ENCODE measurements at regions of chr16 and their contacts with region 1.

Region 1: DNA sequence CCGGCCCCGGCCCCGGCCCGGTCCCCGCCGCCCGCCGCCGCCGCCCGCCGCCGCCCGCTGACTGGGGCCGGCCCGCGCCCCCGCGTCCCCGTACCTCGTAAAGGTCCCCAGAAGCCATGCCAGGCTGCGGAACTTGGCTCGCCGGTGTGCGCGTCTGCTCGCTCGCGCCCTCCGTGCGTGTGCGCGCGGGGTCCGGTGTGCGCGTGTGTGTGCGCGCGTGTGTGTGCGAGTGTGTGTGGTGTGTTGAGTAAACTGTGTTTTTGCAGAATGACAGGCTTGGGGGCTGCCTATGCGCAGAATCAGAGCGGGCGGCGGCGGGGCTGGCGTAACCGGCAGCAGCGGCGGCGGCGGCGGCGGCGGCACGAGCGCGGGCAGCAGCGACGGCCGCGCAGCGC is 345 bp downstream of the CDYL2 start:
- DNase-seq: peak; percentile 57 to 70 (median 65)
- H3K4me3 ChIP-seq: peak overlapping the region in 1 of 2 donors; percentile 51
- H3K4me3 Mint-ChIP-seq: peak overlapping the region; percentile 80 to 98 (median 96)
- H3K27ac ChIP-seq: no peak overlapping the region
- H3K27ac Mint-ChIP-seq: peak overlapping the region; percentile 74 to 96 (median 86)
- H3K4me1 ChIP-seq: peaks cover 31% of the 10 kb centered on the region
- H3K4me1 Mint-ChIP-seq: peaks cover 12 to 38% (median 27%) of the 10 kb centered on the region in 4 donors
- H3K27me3 ChIP-seq: no peaks in the 10 kb centered on the region
- H3K27me3 Mint-ChIP-seq: no peaks in the 10 kb centered on the region

Region 2: DNA sequence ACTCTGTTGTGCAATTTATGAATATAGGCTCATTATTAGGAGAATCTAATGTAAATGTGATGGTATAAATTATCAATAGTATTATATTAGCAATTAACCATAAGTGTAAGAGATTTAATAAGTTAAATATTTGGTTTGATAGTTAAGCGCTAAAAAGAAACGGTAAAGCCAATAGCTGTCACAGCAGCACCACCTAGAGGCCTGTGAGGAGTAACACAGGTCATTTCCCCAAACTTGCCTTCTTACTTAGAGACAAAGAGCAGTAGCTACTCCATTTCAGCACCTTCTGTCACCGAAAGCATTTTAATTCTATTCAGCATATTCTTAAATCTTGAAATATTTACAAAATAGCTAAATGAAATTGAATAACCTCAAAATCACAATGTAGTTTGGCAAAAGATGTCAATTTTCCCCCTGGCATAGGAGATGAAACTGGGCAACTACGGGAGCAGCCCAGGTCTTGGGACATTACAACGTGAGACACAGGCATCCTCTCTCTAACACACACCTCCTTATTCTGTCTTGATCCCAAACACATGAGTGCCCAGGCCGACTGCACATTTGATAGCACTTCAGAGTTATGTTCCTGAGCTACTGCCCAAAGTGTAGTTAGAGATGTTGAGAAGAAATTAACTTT is 277.5 kb before region 1 on chr16:
- CTCF ChIA-PET with region 1: interaction called, 15 read pairs
- POLR2A ChIA-PET with region 1: no interaction called
- intact Hi-C with region 1: no loop called
- DNase-seq: peak; percentile 53 to 66 (median 62)
- H3K4me3 ChIP-seq: no peak overlapping the region
- H3K4me3 Mint-ChIP-seq: no peak overlapping the region
- H3K27ac ChIP-seq: no peak overlapping the region
- H3K27ac Mint-ChIP-seq: peak overlapping the region in 1 of 7 donors; percentile 18
- H3K4me1 ChIP-seq: peaks cover 6% of the 10 kb centered on the region
- H3K4me1 Mint-ChIP-seq: peaks cover 0 to 4% (median 2%) of the 10 kb centered on the region in 4 donors
- H3K27me3 ChIP-seq: no peaks in the 10 kb centered on the region
- H3K27me3 Mint-ChIP-seq: no peaks in the 10 kb centered on the region

Region 3: DNA sequence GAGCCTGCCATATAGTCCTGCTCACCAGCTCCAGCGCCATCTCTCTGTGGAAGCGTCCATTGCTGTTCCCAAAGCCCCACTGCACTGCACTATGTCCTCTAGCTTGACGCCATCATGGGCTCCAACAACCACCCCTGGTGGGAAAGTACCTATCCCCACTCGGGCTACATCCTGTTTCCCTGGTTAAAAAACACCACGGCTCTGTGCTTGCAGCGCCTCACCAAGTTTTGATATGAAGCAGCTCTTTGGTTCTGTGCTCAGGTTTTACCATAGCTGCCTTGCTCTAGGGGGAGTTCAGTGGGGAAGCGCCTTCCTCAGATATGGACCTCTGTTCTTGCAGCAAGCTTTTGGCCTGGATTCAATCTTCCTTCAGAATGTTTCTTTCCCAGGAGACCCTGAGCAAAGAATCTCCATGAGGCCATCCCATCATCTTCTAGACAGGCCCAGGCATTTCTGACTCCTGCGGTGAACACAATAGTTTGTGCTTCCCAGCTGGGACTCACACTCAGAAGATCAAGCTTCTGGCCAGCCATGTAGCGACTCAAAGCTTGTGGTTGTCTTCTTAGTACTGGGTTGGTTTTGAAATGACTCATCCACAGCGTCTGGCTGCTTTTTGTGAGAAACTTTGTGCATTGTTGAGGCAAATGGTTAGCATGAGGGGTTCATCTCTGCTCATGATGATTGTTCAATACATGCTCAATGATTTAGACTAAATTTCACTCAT is 223.8 kb before region 1 on chr16:
- CTCF ChIA-PET with region 1: interaction called, 7 read pairs
- POLR2A ChIA-PET with region 1: interaction called, 5 read pairs
- intact Hi-C with region 1: loop called (anchors 5 kb)
- DNase-seq: peak; percentile 55 to 81 (median 64)
- H3K4me3 ChIP-seq: peak overlapping the region in 1 of 2 donors; percentile 22
- H3K4me3 Mint-ChIP-seq: peak overlapping the region; percentile 39 to 84 (median 64)
- H3K27ac ChIP-seq: peak overlapping the region; percentile 7
- H3K27ac Mint-ChIP-seq: peak overlapping the region; percentile 86 to 96 (median 92)
- H3K4me1 ChIP-seq: peaks cover 46% of the 10 kb centered on the region
- H3K4me1 Mint-ChIP-seq: peaks cover 26 to 56% (median 38%) of the 10 kb centered on the region in 4 donors
- H3K27me3 ChIP-seq: no peaks in the 10 kb centered on the region
- H3K27me3 Mint-ChIP-seq: no peaks in the 10 kb centered on the region

Region 4: GRCh38 chr16:80605826-80606766 is 198.0 kb before region 1 on chr16:
- CTCF ChIA-PET with region 1: no interaction called
- POLR2A ChIA-PET with region 1: no interaction called
- intact Hi-C with region 1: no loop called
- DNase-seq: no peak
- H3K4me3 ChIP-seq: no peak overlapping the region
- H3K4me3 Mint-ChIP-seq: peak overlapping the region in 4 of 8 donors; percentile 27 to 51 (median 42)
- H3K27ac ChIP-seq: no peak overlapping the region
- H3K27ac Mint-ChIP-seq: peak overlapping the region in 3 of 7 donors; percentile 5 to 61 (median 52)
- H3K4me1 ChIP-seq: peaks cover 12% of the 10 kb centered on the region
- H3K4me1 Mint-ChIP-seq: peaks cover 8 to 12% (median 12%) of the 10 kb centered on the region in 4 donors
- H3K27me3 ChIP-seq: no peaks in the 10 kb centered on the region
- H3K27me3 Mint-ChIP-seq: no peaks in the 10 kb centered on the region

Region 5: GRCh38 chr16:80759419-80760162 is 44.5 kb before region 1 on chr16:
- CTCF ChIA-PET with region 1: no interaction called
- POLR2A ChIA-PET with region 1: no interaction called
- intact Hi-C with region 1: no loop called
- DNase-seq: no peak
- H3K4me3 ChIP-seq: no peak overlapping the region
- H3K4me3 Mint-ChIP-seq: no peak overlapping the region
- H3K27ac ChIP-seq: no peak overlapping the region
- H3K27ac Mint-ChIP-seq: peak overlapping the region in 1 of 7 donors; percentile 0
- H3K4me1 ChIP-seq: peaks cover 9% of the 10 kb centered on the region
- H3K4me1 Mint-ChIP-seq: peaks cover 0 to 20% (median 12%) of the 10 kb centered on the region in 4 donors
- H3K27me3 ChIP-seq: no peaks in the 10 kb centered on the region
- H3K27me3 Mint-ChIP-seq: no peaks in the 10 kb centered on the region

Region 6: GRCh38 chr16:80824718-80825364 is 20.8 kb after region 1 on chr16:
- CTCF ChIA-PET with region 1: interaction called, 6 read pairs
- POLR2A ChIA-PET with region 1: no interaction called
- intact Hi-C with region 1: loop called (anchors 1 kb)
- DNase-seq: peak; percentile 32 to 46 (median 44)
- H3K4me3 ChIP-seq: no peak overlapping the region
- H3K4me3 Mint-ChIP-seq: no peak overlapping the region
- H3K27ac ChIP-seq: no peak overlapping the region
- H3K27ac Mint-ChIP-seq: no peak overlapping the region
- H3K4me1 ChIP-seq: no peaks in the 10 kb centered on the region
- H3K4me1 Mint-ChIP-seq: peaks cover 0 to 2% (median 0%) of the 10 kb centered on the region in 4 donors
- H3K27me3 ChIP-seq: peaks cover 3% of the 10 kb centered on the region
- H3K27me3 Mint-ChIP-seq: peaks cover 2 to 4% of the 10 kb centered on the region in 2 donors

Region 7: GRCh38 chr16:80883159-80883642 is 79.1 kb after region 1 on chr16:
- CTCF ChIA-PET with region 1: no interaction called
- POLR2A ChIA-PET with region 1: no interaction called
- intact Hi-C with region 1: no loop called
- DNase-seq: no peak
- H3K4me3 ChIP-seq: no peak overlapping the region
- H3K4me3 Mint-ChIP-seq: no peak overlapping the region
- H3K27ac ChIP-seq: no peak overlapping the region
- H3K27ac Mint-ChIP-seq: no peak overlapping the region
- H3K4me1 ChIP-seq: no peaks in the 10 kb centered on the region
- H3K4me1 Mint-ChIP-seq: no peaks in the 10 kb centered on the region
- H3K27me3 ChIP-seq: no peaks in the 10 kb centered on the region
- H3K27me3 Mint-ChIP-seq: peaks cover 16 to 20% of the 10 kb centered on the region in 2 donors

Region 8: GRCh38 chr16:81174654-81175571 is 370.9 kb after region 1 on chr16:
- CTCF ChIA-PET with region 1: no interaction called
- POLR2A ChIA-PET with region 1: no interaction called
- intact Hi-C with region 1: no loop called
- DNase-seq: no peak
- H3K4me3 ChIP-seq: no peak overlapping the region
- H3K4me3 Mint-ChIP-seq: no peak overlapping the region
- H3K27ac ChIP-seq: no peak overlapping the region
- H3K27ac Mint-ChIP-seq: no peak overlapping the region
- H3K4me1 ChIP-seq: no peaks in the 10 kb centered on the region
- H3K4me1 Mint-ChIP-seq: peaks cover 0 to 1% (median 0%) of the 10 kb centered on the region in 4 donors
- H3K27me3 ChIP-seq: no peaks in the 10 kb centered on the region
- H3K27me3 Mint-ChIP-seq: peaks cover 3 to 15% of the 10 kb centered on the region in 2 donors

Region 9: DNA sequence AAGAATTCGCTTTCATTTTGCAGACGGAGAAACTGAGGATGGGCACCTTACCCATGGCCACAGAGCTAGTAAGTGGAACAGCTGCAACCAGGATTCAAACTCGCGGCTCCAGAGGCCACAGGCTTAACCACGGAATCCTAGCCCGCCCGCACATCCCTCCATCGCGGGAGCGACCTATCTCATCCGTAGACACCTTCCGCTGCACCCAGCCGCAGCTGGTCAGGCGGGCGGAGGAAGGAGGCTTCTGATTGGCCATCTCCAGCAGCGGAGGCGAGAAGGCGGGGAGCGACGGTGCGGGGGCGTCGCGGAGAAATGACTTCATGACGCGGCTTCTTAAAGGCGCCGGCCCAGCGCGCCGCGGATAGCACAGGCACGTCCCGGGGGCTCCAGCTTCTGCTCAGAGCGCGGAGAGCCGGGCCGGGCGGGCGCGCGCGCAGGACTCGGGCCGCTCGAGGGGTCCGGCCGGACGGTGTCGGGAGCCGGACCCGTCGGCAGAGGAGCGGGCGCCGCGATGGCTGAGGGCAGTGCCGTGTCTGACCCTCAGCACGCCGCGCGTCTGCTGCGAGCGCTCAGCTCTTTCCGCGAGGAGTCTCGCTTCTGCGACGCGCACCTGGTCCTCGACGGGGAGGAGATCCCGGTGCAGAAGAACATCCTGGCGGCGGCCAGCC is 510.7 kb after region 1 on chr16 and contains the start of gene GAN:
- CTCF ChIA-PET with region 1: no interaction called
- POLR2A ChIA-PET with region 1: no interaction called
- intact Hi-C with region 1: loop called (anchors 10 kb)
- DNase-seq: peak; percentile 93 to 95 (median 94)
- H3K4me3 ChIP-seq: peak within 1 kb of the TSS; percentile 86 to 93
- H3K4me3 Mint-ChIP-seq: peak within 1 kb of the TSS; percentile 92 to 99 (median 97)
- H3K27ac ChIP-seq: peak within 1 kb of the TSS; percentile 33
- H3K27ac Mint-ChIP-seq: peak within 1 kb of the TSS; percentile 89 to 98 (median 94)
- H3K4me1 ChIP-seq: peaks cover 25% of the 10 kb centered on the region
- H3K4me1 Mint-ChIP-seq: peaks cover 33 to 53% (median 44%) of the 10 kb centered on the region in 4 donors
- H3K27me3 ChIP-seq: no peaks in the 10 kb centered on the region
- H3K27me3 Mint-ChIP-seq: no peaks in the 10 kb centered on the region
- total RNA-seq, gene GAN: 9.5 to 10.8 TPM

Measured in CD4-positive, alpha-beta memory T cell (primary cell).